ENCODE measurements at regions of chr17 and their contacts with region 1.

Region 1: GRCh38 chr17:65556014-65556909 is 5.2 kb downstream of the AXIN2 start:
- DNase-seq: peak; percentile 76
- H3K4me3 Mint-ChIP-seq: no peak overlapping the region
- H3K27ac Mint-ChIP-seq: no peak overlapping the region
- H3K4me1 Mint-ChIP-seq: peaks cover 29% of the 10 kb centered on the region
- H3K27me3 Mint-ChIP-seq: peaks cover 20% of the 10 kb centered on the region

Region 2: GRCh38 chr17:65294179-65294720 is 262.0 kb before region 1 on chr17:
- intact Hi-C with region 1: loop called (anchors 1 kb)
- DNase-seq: peak; percentile 27
- H3K4me3 Mint-ChIP-seq: no peak overlapping the region
- H3K27ac Mint-ChIP-seq: no peak overlapping the region
- H3K4me1 Mint-ChIP-seq: peaks cover 6% of the 10 kb centered on the region
- H3K27me3 Mint-ChIP-seq: peaks cover 13% of the 10 kb centered on the region

Region 3: GRCh38 chr17:65362825-65363224 is 193.4 kb before region 1 on chr17:
- intact Hi-C with region 1: loop called (anchors 10 kb)
- DNase-seq: no peak
- H3K4me3 Mint-ChIP-seq: no peak overlapping the region
- H3K27ac Mint-ChIP-seq: no peak overlapping the region
- H3K4me1 Mint-ChIP-seq: peaks cover 19% of the 10 kb centered on the region
- H3K27me3 Mint-ChIP-seq: no peaks in the 10 kb centered on the region

Region 4: GRCh38 chr17:65407017-65407416 is 149.2 kb before region 1 on chr17:
- intact Hi-C with region 1: no loop called
- DNase-seq: no peak
- H3K4me3 Mint-ChIP-seq: no peak overlapping the region
- H3K27ac Mint-ChIP-seq: no peak overlapping the region
- H3K4me1 Mint-ChIP-seq: no peaks in the 10 kb centered on the region
- H3K27me3 Mint-ChIP-seq: peaks cover 13% of the 10 kb centered on the region

Region 5: DNA sequence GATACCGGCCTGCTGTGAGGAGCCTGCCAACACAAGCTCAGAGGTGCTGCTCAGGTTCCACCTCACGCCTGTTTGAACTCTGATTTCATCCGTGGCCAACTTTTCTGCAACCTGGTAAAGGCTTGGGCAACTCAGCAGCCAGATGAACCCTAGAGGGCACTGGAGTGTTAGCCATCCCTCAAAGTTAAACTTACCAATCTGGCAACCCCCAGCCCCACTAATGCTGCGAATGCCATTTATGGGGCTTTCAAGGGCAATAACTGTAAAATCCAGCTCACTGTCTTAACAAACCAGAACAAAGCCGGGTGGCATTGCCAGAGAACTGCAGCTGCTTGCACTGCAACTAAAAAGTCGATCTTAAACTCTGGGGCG is 100.3 kb before region 1 on chr17:
- intact Hi-C with region 1: loop called (anchors 2 kb)
- DNase-seq: no peak
- H3K4me3 Mint-ChIP-seq: no peak overlapping the region
- H3K27ac Mint-ChIP-seq: no peak overlapping the region
- H3K4me1 Mint-ChIP-seq: no peaks in the 10 kb centered on the region
- H3K27me3 Mint-ChIP-seq: peaks cover 2% of the 10 kb centered on the region

Region 6: GRCh38 chr17:65523853-65524664 is 32.2 kb before region 1 on chr17:
- intact Hi-C with region 1: loop called (anchors 1 kb)
- DNase-seq: no peak
- H3K4me3 Mint-ChIP-seq: peak overlapping the region; percentile 67
- H3K27ac Mint-ChIP-seq: peak overlapping the region; percentile 70
- H3K4me1 Mint-ChIP-seq: peaks cover 33% of the 10 kb centered on the region
- H3K27me3 Mint-ChIP-seq: peaks cover 42% of the 10 kb centered on the region

Region 7: DNA sequence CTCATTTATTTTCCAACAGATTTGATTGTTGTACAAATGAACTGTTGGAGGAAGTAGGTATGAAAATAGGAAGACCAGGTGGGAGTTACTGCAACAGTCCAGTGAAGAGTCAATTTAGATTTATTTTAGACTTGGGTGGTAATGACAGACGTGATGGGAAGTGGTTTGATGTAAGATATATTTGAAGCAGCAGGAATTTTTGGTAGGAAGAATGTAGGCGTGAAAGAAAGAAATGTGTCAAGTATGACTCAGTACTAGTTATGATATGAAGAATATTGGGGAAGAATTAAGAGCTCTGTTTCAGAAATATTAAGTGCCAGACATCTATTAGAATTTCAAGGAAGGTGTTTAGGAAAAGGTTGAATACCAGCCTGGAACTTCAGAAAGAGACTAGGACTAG is 253.1 kb after region 1 on chr17:
- intact Hi-C with region 1: loop called (anchors 10 kb)
- DNase-seq: no peak
- H3K4me3 Mint-ChIP-seq: no peak overlapping the region
- H3K27ac Mint-ChIP-seq: no peak overlapping the region
- H3K4me1 Mint-ChIP-seq: peaks cover 7% of the 10 kb centered on the region
- H3K27me3 Mint-ChIP-seq: no peaks in the 10 kb centered on the region

Measured in activated T-helper 1 cell treated with anti-CD3 and anti-CD28 coated beads, Interleukin-12 subunit alpha, Interleukin-12 subunit beta, Interleukin-2, Interleukin-4 antibody, amounts not matched to agents 30 ng/mL and 10 ng/mL and 1 ng/mL, durations not matched to agents 14 hours and 24 hours and 36 hours (primary cell).